Heart left ventricle (tissue), 16 donors: ENCODE measurements at regions of chr12 and their contacts with region 1.

Region 1: DNA sequence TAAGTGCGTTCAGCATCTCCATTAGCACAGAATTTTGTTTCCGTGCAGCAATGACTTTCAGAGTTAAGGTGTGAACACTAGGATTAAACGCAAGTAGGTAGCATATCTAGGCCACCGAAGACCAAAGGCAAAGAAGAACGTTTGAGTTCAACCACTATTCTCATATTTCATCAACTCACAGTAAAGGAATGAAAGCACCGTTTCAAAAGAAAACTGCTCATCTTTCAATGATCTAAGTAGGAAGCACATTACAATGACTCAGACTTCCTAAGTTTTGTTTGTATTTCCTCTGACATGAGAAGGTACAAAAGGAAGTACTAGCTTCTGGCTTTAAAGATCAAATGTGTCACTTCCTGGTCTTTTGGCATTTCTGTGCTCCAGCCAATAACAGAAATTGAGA is 57.6 kb downstream of the ACADS start:
- DNase-seq: no peak
- ATAC-seq: peak in 3 of 4 donors; percentile 31 to 86 (median 33)
- H3K4me3 ChIP-seq: no peak overlapping the region
- H3K27ac ChIP-seq: peak overlapping the region in 11 of 12 donors; percentile 9 to 80 (median 54)
- H3K4me1 ChIP-seq: peaks cover 0 to 19% (median 3%) of the 10 kb centered on the region in 12 donors
- H3K27me3 ChIP-seq: no peaks in the 10 kb centered on the region
- CTCF ChIP-seq: no peak
- POLR2A ChIP-seq: no peak

Region 2: DNA sequence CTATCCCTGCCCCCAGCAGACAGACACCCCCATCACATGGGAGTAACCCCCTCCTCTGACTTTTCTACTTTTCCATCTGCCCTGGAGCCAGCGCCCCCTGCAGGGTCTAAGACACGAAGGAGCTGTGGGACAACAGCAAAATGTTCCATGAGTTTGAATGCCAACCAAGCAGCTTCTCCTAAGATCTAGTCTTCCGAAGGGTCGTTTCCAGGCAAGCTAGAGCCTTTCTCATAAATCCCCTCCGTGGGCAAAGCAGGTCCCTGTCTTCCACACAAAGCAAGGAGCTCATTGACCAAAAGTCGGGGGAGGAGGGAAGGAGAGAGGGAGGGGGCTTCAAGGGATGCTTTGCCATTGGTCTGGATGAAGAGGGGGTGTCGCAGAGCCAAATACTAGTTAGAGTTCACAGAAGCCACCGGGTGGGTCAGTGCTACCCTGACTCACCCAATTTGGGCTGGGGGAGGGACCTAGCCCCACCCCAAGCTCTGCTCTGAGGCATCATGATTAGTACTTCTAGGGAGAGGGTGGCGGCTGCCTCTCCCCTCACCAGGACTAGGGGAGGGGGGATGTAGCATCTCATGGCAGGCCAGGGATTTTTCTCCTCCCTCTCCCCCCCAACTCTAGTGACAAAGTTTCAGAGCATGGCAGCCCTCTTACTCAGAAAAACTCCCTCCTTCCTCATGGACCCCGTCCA is 415.8 kb before region 1 on chr12:
- intact Hi-C with region 1: no loop called
- DNase-seq: no peak
- ATAC-seq: peak in 1 of 4 donors; percentile 4
- H3K4me3 ChIP-seq: peak overlapping the region in 9 of 12 donors; percentile 57 to 86 (median 66)
- H3K27ac ChIP-seq: peak overlapping the region in 5 of 12 donors; percentile 27 to 75 (median 54)
- H3K4me1 ChIP-seq: peaks cover 0 to 22% (median 3%) of the 10 kb centered on the region in 12 donors
- H3K27me3 ChIP-seq: peaks cover 0 to 58% (median 9%) of the 10 kb centered on the region in 9 donors
- CTCF ChIP-seq: peak in 6 of 12 donors; percentile 17 to 39 (median 29)
- POLR2A ChIP-seq: no peak

Region 3: DNA sequence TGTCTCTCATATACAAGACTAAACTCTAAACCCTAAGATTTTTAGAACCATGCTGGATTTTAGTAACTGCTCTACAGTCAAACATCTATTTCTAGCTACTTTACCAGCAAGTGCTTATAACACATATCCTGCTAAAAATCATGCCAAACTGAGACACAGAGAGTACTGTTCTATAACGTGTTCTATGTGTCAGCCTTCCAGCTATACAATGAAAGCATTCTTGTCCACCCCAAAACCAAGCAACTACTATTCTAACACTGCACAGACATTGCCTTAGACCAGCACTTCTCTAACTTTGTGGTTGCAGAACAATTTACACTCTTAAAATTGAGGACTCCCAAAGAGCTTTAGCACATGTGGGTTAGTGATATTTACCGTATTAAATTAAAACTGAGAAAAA is 35.2 kb after region 1 on chr12:
- intact Hi-C with region 1: no loop called
- DNase-seq: no peak
- ATAC-seq: no peak
- H3K4me3 ChIP-seq: no peak overlapping the region
- H3K27ac ChIP-seq: no peak overlapping the region
- H3K4me1 ChIP-seq: peaks cover 0 to 53% (median 20%) of the 10 kb centered on the region in 12 donors
- H3K27me3 ChIP-seq: no peaks in the 10 kb centered on the region
- CTCF ChIP-seq: no peak
- POLR2A ChIP-seq: no peak

Region 4: GRCh38 chr12:120849765-120850164 is 66.6 kb after region 1 on chr12:
- intact Hi-C with region 1: loop called in 1 of 10 experiments (anchors 10 kb)
- DNase-seq: no peak
- ATAC-seq: peak; percentile 31 to 84 (median 55)
- H3K4me3 ChIP-seq: no peak overlapping the region
- H3K27ac ChIP-seq: peak overlapping the region in 9 of 12 donors; percentile 16 to 73 (median 51)
- H3K4me1 ChIP-seq: peaks cover 0 to 89% (median 67%) of the 10 kb centered on the region in 12 donors
- H3K27me3 ChIP-seq: no peaks in the 10 kb centered on the region
- CTCF ChIP-seq: no peak
- POLR2A ChIP-seq: no peak